B cell (primary cell): ENCODE measurements at regions of chr3 and their contacts with region 1.

Region 1: GRCh38 chr3:149765762-149766334 is 13.6 kb upstream of the COMMD2 start:
- DNase-seq: peak; percentile 58
- ATAC-seq: peak; percentile 45
- H3K4me3 ChIP-seq: no peak overlapping the region
- H3K4me3 Mint-ChIP-seq: no peak overlapping the region
- H3K27ac ChIP-seq: no peak overlapping the region
- H3K27ac Mint-ChIP-seq: no peak overlapping the region
- H3K4me1 ChIP-seq: no peaks in the 10 kb centered on the region
- H3K4me1 Mint-ChIP-seq: no peaks in the 10 kb centered on the region
- H3K27me3 ChIP-seq: peaks cover 0 to 17% (median 13%) of the 10 kb centered on the region in 4 experiments
- H3K27me3 Mint-ChIP-seq: peaks cover 24% of the 10 kb centered on the region
- CTCF ChIP-seq: peak; percentile 73

Region 2: DNA sequence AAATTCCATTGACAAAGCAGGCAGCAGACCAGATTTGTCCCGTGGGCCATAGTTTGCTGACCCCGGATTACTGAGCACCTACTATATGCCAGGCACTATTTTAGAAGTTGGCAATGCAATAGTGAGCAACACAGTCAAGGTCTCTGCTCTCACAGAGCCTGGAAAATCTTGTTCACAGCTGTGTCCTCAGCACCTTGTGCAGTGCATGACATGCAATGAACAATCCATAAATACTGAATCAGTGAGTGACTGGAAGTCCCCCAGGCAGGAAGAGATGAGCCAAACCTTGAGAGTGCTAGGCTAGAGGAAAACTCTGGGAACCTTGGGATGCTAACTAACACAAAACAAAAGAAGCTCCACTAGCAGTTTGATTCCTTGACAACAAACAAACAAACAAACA is 402.8 kb before region 1 on chr3:
- CTCF ChIA-PET with region 1: no interaction called
- POLR2A ChIA-PET with region 1: no interaction called
- intact Hi-C with region 1: no loop called
- DNase-seq: no peak
- ATAC-seq: no peak
- H3K4me3 ChIP-seq: no peak overlapping the region
- H3K4me3 Mint-ChIP-seq: no peak overlapping the region
- H3K27ac ChIP-seq: no peak overlapping the region
- H3K27ac Mint-ChIP-seq: no peak overlapping the region
- H3K4me1 ChIP-seq: no peaks in the 10 kb centered on the region
- H3K4me1 Mint-ChIP-seq: no peaks in the 10 kb centered on the region
- H3K27me3 ChIP-seq: peaks cover 0 to 12% (median 3%) of the 10 kb centered on the region in 4 experiments
- H3K27me3 Mint-ChIP-seq: peaks cover 22% of the 10 kb centered on the region
- CTCF ChIP-seq: no peak

Region 3: GRCh38 chr3:149657926-149658733 is 107.7 kb before region 1 on chr3 and contains the start of gene WWTR1:
- CTCF ChIA-PET with region 1: no interaction called
- POLR2A ChIA-PET with region 1: no interaction called
- intact Hi-C with region 1: no loop called
- DNase-seq: peak; percentile 41
- ATAC-seq: peak; percentile 53
- H3K4me3 ChIP-seq: peak within 1 kb of the TSS; percentile 28 to 77 (median 63)
- H3K4me3 Mint-ChIP-seq: peak within 1 kb of the TSS; percentile 92
- H3K27ac ChIP-seq: peak within 1 kb of the TSS in 1 of 2 donors; percentile 43
- H3K27ac Mint-ChIP-seq: peak within 1 kb of the TSS; percentile 62
- H3K4me1 ChIP-seq: peaks cover 21 to 22% of the 10 kb centered on the region in 2 donors
- H3K4me1 Mint-ChIP-seq: peaks cover 14% of the 10 kb centered on the region
- H3K27me3 ChIP-seq: peaks cover 0 to 47% (median 15%) of the 10 kb centered on the region in 4 experiments
- H3K27me3 Mint-ChIP-seq: peaks cover 57% of the 10 kb centered on the region
- CTCF ChIP-seq: no peak
- total RNA-seq, gene WWTR1: 0.92 and 2.3 TPM in 2 replicates

Region 4: GRCh38 chr3:149717391-149718056 is 48.3 kb before region 1 on chr3:
- CTCF ChIA-PET with region 1: no interaction called
- POLR2A ChIA-PET with region 1: no interaction called
- intact Hi-C with region 1: no loop called
- DNase-seq: peak; percentile 36
- ATAC-seq: no peak
- H3K4me3 ChIP-seq: peak overlapping the region in 2 of 5 experiments; percentile 31 to 37
- H3K4me3 Mint-ChIP-seq: peak overlapping the region; percentile 47
- H3K27ac ChIP-seq: no peak overlapping the region
- H3K27ac Mint-ChIP-seq: no peak overlapping the region
- H3K4me1 ChIP-seq: no peaks in the 10 kb centered on the region
- H3K4me1 Mint-ChIP-seq: no peaks in the 10 kb centered on the region
- H3K27me3 ChIP-seq: no peaks in the 10 kb centered on the region
- H3K27me3 Mint-ChIP-seq: peaks cover under 1% of the 10 kb centered on the region
- CTCF ChIP-seq: peak; percentile 75

Region 5: GRCh38 chr3:149752051-149752787 is 13.6 kb before region 1 on chr3 and contains the start of gene COMMD2:
- CTCF ChIA-PET with region 1: interaction called, 14 read pairs
- POLR2A ChIA-PET with region 1: no interaction called
- intact Hi-C with region 1: no loop called
- DNase-seq: peak; percentile 86
- ATAC-seq: peak; percentile 95
- H3K4me3 ChIP-seq: peak within 1 kb of the TSS; percentile 69 to 92 (median 83)
- H3K4me3 Mint-ChIP-seq: peak within 1 kb of the TSS; percentile 98
- H3K27ac ChIP-seq: peak within 1 kb of the TSS; percentile 65 to 84
- H3K27ac Mint-ChIP-seq: peak within 1 kb of the TSS; percentile 96
- H3K4me1 ChIP-seq: peaks cover 11 to 15% of the 10 kb centered on the region in 2 donors
- H3K4me1 Mint-ChIP-seq: peaks cover 27% of the 10 kb centered on the region
- H3K27me3 ChIP-seq: no peaks in the 10 kb centered on the region
- H3K27me3 Mint-ChIP-seq: peaks cover 5% of the 10 kb centered on the region
- CTCF ChIP-seq: peak; percentile 68
- total RNA-seq, gene COMMD2: 45.1 and 47.8 TPM in 2 replicates

Region 6: GRCh38 chr3:149777414-149778214 is 11.8 kb after region 1 on chr3:
- CTCF ChIA-PET with region 1: interaction called, 22 read pairs
- POLR2A ChIA-PET with region 1: no interaction called
- intact Hi-C with region 1: no loop called
- DNase-seq: no peak
- ATAC-seq: no peak
- H3K4me3 ChIP-seq: no peak overlapping the region
- H3K4me3 Mint-ChIP-seq: no peak overlapping the region
- H3K27ac ChIP-seq: no peak overlapping the region
- H3K27ac Mint-ChIP-seq: no peak overlapping the region
- H3K4me1 ChIP-seq: peaks cover 24 to 25% of the 10 kb centered on the region in 2 donors
- H3K4me1 Mint-ChIP-seq: peaks cover 20% of the 10 kb centered on the region
- H3K27me3 ChIP-seq: no peaks in the 10 kb centered on the region
- H3K27me3 Mint-ChIP-seq: peaks cover 6% of the 10 kb centered on the region
- CTCF ChIP-seq: no peak

Region 7: DNA sequence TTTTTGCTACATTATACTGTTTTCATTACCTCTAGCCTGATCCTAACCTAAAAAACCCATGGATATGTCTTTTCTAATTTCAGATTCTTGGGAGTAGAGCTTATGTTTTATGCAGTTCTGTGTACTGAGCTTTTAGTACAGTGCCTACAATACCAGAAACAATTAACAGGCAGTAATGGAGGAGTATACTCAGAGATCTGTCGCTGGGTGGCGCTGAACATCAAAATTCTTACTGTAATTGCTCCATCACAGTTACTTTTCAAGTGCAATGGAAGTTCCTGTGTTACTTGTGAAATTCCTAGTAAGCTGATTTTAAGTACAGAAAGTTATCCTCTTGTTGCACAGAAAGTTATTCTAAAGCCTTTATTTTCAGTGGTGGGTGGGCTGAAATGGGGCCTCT is 114.0 kb after region 1 on chr3:
- CTCF ChIA-PET with region 1: interaction called, 13 read pairs
- POLR2A ChIA-PET with region 1: no interaction called
- intact Hi-C with region 1: no loop called
- DNase-seq: peak; percentile 23
- ATAC-seq: no peak
- H3K4me3 ChIP-seq: no peak overlapping the region
- H3K4me3 Mint-ChIP-seq: no peak overlapping the region
- H3K27ac ChIP-seq: no peak overlapping the region
- H3K27ac Mint-ChIP-seq: no peak overlapping the region
- H3K4me1 ChIP-seq: peaks cover 6% of the 10 kb centered on the region in 2 donors
- H3K4me1 Mint-ChIP-seq: peaks cover 8% of the 10 kb centered on the region
- H3K27me3 ChIP-seq: no peaks in the 10 kb centered on the region
- H3K27me3 Mint-ChIP-seq: no peaks in the 10 kb centered on the region
- CTCF ChIP-seq: peak; percentile 49

Region 8: DNA sequence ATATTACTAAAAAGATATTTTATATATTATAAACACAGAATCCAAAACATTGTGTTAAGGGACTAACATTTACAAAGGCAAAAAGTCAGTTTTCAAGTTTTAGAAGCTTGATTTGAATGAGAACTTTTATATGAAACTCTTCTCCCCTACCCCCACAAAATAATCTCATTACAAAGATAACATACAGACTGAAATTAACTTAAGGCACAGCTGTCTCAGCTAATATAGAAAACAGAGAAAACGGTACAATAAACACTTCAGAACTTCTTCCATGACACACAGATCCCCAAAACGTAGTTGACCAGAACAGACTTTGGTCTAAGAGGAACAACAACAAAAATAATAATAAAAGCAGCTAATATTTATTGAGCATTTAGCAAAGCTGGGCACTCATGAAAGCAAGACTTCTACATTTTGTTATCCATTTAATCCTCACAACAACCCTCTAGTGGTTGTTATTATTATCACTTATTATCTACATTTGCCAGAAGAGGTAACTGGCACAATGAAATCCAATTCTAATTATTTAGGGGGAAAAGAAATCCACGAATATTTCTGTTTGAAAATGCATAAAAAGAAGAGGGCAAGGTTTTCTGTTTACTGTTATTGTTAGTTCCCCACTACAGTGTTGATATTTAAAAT is 136.8 kb after region 1 on chr3:
- CTCF ChIA-PET with region 1: interaction called, 6 read pairs
- POLR2A ChIA-PET with region 1: no interaction called
- intact Hi-C with region 1: loop called (anchors 1 kb)
- DNase-seq: no peak
- ATAC-seq: no peak
- H3K4me3 ChIP-seq: no peak overlapping the region
- H3K4me3 Mint-ChIP-seq: no peak overlapping the region
- H3K27ac ChIP-seq: no peak overlapping the region
- H3K27ac Mint-ChIP-seq: no peak overlapping the region
- H3K4me1 ChIP-seq: no peaks in the 10 kb centered on the region
- H3K4me1 Mint-ChIP-seq: no peaks in the 10 kb centered on the region
- H3K27me3 ChIP-seq: no peaks in the 10 kb centered on the region
- H3K27me3 Mint-ChIP-seq: no peaks in the 10 kb centered on the region
- CTCF ChIP-seq: peak; percentile 28

Region 9: GRCh38 chr3:150183678-150184425 is 418.0 kb after region 1 on chr3:
- CTCF ChIA-PET with region 1: interaction called, 11 read pairs
- POLR2A ChIA-PET with region 1: no interaction called
- intact Hi-C with region 1: loop called (anchors 2 kb)
- DNase-seq: peak; percentile 53
- ATAC-seq: peak; percentile 60
- H3K4me3 ChIP-seq: peak overlapping the region in 2 of 5 experiments; percentile 11 to 21
- H3K4me3 Mint-ChIP-seq: no peak overlapping the region
- H3K27ac ChIP-seq: no peak overlapping the region
- H3K27ac Mint-ChIP-seq: no peak overlapping the region
- H3K4me1 ChIP-seq: peaks cover 7 to 8% of the 10 kb centered on the region in 2 donors
- H3K4me1 Mint-ChIP-seq: no peaks in the 10 kb centered on the region
- H3K27me3 ChIP-seq: peaks cover 0 to 9% (median 2%) of the 10 kb centered on the region in 4 experiments
- H3K27me3 Mint-ChIP-seq: peaks cover 17% of the 10 kb centered on the region
- CTCF ChIP-seq: peak; percentile 51

Region 10: DNA sequence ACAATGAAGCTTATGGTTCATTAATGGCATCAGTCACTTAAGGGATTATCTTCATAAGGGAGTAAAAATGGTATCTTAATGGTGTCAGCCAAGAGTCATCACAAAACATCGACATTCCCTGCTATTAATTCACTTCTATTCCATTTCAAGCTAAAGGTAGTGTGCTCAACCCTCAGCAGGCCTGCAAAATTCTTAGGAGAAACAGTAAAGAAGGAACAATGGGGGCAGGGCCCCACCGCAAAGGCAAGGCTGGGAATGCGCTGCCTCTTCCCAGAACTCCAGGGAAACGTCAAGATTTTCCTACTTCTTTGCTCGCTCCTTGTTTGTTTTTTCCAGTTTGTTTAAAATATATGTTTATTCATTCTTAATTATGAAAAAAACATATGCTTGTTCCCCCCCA is 455.0 kb after region 1 on chr3:
- CTCF ChIA-PET with region 1: interaction called, 12 read pairs
- POLR2A ChIA-PET with region 1: no interaction called
- intact Hi-C with region 1: no loop called
- DNase-seq: no peak
- ATAC-seq: no peak
- H3K4me3 ChIP-seq: no peak overlapping the region
- H3K4me3 Mint-ChIP-seq: no peak overlapping the region
- H3K27ac ChIP-seq: no peak overlapping the region
- H3K27ac Mint-ChIP-seq: no peak overlapping the region
- H3K4me1 ChIP-seq: peaks cover 10 to 13% of the 10 kb centered on the region in 2 donors
- H3K4me1 Mint-ChIP-seq: peaks cover 10% of the 10 kb centered on the region
- H3K27me3 ChIP-seq: peaks cover 0 to 31% (median 13%) of the 10 kb centered on the region in 4 experiments
- H3K27me3 Mint-ChIP-seq: peaks cover 58% of the 10 kb centered on the region
- CTCF ChIP-seq: no peak